HCT116 (cell line): ENCODE measurements at regions of chr5 and their contacts with region 1.

Region 1: DNA sequence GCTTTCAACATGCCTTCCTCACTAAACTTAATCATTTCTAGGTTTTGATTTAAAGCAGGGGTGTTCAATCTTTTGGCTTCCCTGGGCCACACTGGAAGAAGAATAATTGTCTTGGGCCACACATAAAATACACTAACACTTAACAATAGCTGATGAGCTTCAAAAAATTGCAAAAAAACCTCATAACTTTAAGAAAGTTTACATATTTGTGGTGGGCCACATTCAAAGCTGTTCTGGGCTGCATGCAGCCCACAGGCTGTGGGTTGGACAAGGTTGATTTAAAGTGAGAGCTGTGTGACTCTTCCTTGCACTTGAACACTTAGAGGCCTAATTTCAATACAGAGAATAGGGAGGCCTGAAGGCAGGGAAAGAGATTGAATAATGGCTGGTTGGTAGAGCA is 598.3 kb downstream of the EFNA5 start:
- DNase-seq: no peak
- ATAC-seq: no peak
- H3K4me3 ChIP-seq: no peak overlapping the region
- H3K27ac ChIP-seq: no peak overlapping the region
- H3K4me1 ChIP-seq: no peaks in the 10 kb centered on the region
- H3K27me3 ChIP-seq: no peaks in the 10 kb centered on the region
- CTCF ChIP-seq: no peak
- POLR2A ChIP-seq: no peak
- RAD21 ChIP-seq: no peak

Region 2: GRCh38 chr5:107023732-107024131 is 48.7 kb before region 1 on chr5:
- CTCF ChIA-PET with region 1: no interaction called
- POLR2A ChIA-PET with region 1: no interaction called
- RAD21 ChIA-PET with region 1: no interaction called
- intact Hi-C with region 1: loop called (anchors 1 kb)
- DNase-seq: no peak
- ATAC-seq: no peak
- H3K4me3 ChIP-seq: no peak overlapping the region
- H3K27ac ChIP-seq: no peak overlapping the region
- H3K4me1 ChIP-seq: no peaks in the 10 kb centered on the region
- H3K27me3 ChIP-seq: no peaks in the 10 kb centered on the region
- CTCF ChIP-seq: no peak
- POLR2A ChIP-seq: no peak
- RAD21 ChIP-seq: no peak

Region 3: GRCh38 chr5:107056278-107056677 is 16.2 kb before region 1 on chr5:
- CTCF ChIA-PET with region 1: no interaction called
- POLR2A ChIA-PET with region 1: no interaction called
- RAD21 ChIA-PET with region 1: no interaction called
- intact Hi-C with region 1: no loop called
- DNase-seq: no peak
- ATAC-seq: no peak
- H3K4me3 ChIP-seq: no peak overlapping the region
- H3K27ac ChIP-seq: no peak overlapping the region
- H3K4me1 ChIP-seq: no peaks in the 10 kb centered on the region
- H3K27me3 ChIP-seq: no peaks in the 10 kb centered on the region
- CTCF ChIP-seq: no peak
- POLR2A ChIP-seq: no peak
- RAD21 ChIP-seq: no peak

Region 4: GRCh38 chr5:107112216-107112615 is 39.8 kb after region 1 on chr5:
- CTCF ChIA-PET with region 1: no interaction called
- POLR2A ChIA-PET with region 1: no interaction called
- RAD21 ChIA-PET with region 1: no interaction called
- intact Hi-C with region 1: no loop called
- DNase-seq: no peak
- ATAC-seq: no peak
- H3K4me3 ChIP-seq: no peak overlapping the region
- H3K27ac ChIP-seq: no peak overlapping the region
- H3K4me1 ChIP-seq: no peaks in the 10 kb centered on the region
- H3K27me3 ChIP-seq: no peaks in the 10 kb centered on the region
- CTCF ChIP-seq: no peak
- POLR2A ChIP-seq: no peak
- RAD21 ChIP-seq: no peak